ENCODE measurements at regions of chr4 and their contacts with region 1.

Region 1: DNA sequence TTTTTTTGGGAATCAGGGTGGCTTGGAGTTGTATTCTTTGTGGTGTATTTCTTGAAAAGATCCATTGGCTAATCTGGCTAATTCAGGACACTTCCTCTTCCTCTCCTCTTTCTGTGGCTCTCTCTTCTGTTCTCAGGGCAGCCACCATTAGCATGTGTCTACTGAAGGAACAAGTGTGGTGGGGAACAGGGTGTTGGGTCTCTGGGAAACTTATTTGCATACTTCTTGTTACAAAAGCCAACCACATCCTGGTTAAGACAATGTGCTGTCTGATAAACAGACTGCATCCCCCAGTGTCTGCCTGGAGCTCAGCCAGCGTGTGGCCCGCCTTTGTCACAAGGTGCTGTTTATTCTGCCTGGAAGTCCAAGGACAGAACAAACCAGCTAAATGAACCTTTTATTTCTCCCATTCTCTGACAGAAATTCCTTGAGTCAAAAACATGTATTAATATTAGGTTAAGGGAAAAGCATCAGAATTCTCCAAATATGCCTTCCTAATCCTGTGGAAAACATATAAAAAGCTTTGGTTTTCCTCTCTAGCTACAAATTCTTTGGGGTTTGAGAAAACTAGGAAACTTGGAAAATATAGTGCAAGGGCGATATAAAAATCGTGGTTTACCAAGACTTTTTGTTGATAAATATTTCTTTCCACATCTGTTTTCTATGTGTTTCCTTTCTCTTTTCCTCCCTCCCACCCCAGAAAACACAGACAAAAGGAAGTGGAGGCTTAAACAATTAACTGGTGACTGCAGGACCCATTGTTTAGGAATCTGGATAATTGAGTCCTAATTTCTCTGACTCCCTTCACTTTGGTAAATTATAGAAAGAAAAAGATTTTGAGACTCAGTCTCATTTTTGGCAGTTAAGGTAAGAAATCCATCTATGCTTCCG is 203.6 kb downstream of the SPRY1 start:
- DNase-seq: peak; percentile 46 to 81
- ATAC-seq: peak; percentile 95 to 99 (median 97)
- H3K4me3 ChIP-seq: no peak overlapping the region
- H3K4me3 Mint-ChIP-seq: peak overlapping the region; percentile 38
- H3K27ac ChIP-seq: peak overlapping the region; percentile 57
- H3K27ac Mint-ChIP-seq: peak overlapping the region; percentile 76 to 91
- H3K4me1 ChIP-seq: peaks cover 11% of the 10 kb centered on the region
- H3K4me1 Mint-ChIP-seq: peaks cover 33 to 34% of the 10 kb centered on the region in 2 donors
- H3K27me3 ChIP-seq: no peaks in the 10 kb centered on the region
- H3K27me3 Mint-ChIP-seq: peaks cover 0 to 2% of the 10 kb centered on the region in 2 donors
- CTCF ChIP-seq: no peak

Region 2: GRCh38 chr4:123037804-123038203 is 562.4 kb before region 1 on chr4:
- intact Hi-C with region 1: no loop called
- DNase-seq: no peak
- ATAC-seq: no peak
- H3K4me3 ChIP-seq: no peak overlapping the region
- H3K4me3 Mint-ChIP-seq: no peak overlapping the region
- H3K27ac ChIP-seq: no peak overlapping the region
- H3K27ac Mint-ChIP-seq: no peak overlapping the region
- H3K4me1 ChIP-seq: no peaks in the 10 kb centered on the region
- H3K4me1 Mint-ChIP-seq: peaks cover 4 to 5% of the 10 kb centered on the region in 2 donors
- H3K27me3 ChIP-seq: no peaks in the 10 kb centered on the region
- H3K27me3 Mint-ChIP-seq: no peaks in the 10 kb centered on the region
- CTCF ChIP-seq: no peak

Region 3: DNA sequence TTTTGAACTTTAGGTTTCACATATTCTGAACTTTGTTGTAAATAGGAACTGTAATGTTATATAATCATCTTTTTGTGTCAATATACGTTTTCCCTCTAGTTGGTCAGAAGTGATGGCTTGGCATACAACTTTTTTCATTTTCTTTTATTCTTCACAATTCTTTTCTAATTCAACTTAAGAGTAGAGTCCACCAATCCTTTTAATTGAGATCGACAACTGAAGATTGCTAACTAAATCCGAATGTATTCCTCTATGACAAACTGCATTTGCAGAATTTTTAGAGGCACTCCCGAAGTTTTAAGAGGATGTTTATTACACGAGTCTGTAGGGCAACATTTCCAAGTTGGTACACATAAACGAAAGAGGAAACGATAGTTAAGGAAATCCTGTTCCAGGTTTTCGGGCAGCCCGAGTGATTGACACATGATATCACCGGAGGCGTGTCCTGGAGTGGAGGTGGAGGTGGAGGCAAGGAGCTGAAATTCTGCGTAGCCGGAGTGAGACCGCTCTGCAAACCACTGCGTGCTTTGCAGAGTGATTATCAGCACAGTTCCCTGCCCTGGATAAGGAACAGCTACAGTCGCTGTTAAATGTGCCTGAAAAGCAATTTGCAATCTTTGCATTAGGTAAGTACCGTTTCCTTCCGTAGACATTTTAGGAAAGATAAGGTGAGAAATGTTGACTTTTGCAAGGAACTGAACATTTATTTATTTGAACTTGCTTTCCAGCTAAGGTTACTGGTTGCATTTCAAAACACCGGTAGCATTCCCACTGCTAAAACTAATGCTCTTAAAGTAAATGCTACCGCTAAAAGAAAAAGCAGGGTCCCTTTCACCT is 203.6 kb before region 1 on chr4 and contains the start of gene SPRY1:
- intact Hi-C with region 1: loop called (anchors 2 kb)
- DNase-seq: peak; percentile 50 to 85
- ATAC-seq: peak; percentile 43 to 53 (median 52)
- H3K4me3 ChIP-seq: peak within 1 kb of the TSS; percentile 49
- H3K4me3 Mint-ChIP-seq: peak within 1 kb of the TSS; percentile 92
- H3K27ac ChIP-seq: peak within 1 kb of the TSS; percentile 15
- H3K27ac Mint-ChIP-seq: peak within 1 kb of the TSS; percentile 72 to 76
- H3K4me1 ChIP-seq: peaks cover 25% of the 10 kb centered on the region
- H3K4me1 Mint-ChIP-seq: peaks cover 29 to 36% of the 10 kb centered on the region in 2 donors
- H3K27me3 ChIP-seq: peaks cover 10% of the 10 kb centered on the region
- H3K27me3 Mint-ChIP-seq: peaks cover 11 to 13% of the 10 kb centered on the region in 2 donors
- CTCF ChIP-seq: no peak
- total RNA-seq, gene SPRY1: 8.7 to 9.8 (median 9.5) TPM

Region 4: DNA sequence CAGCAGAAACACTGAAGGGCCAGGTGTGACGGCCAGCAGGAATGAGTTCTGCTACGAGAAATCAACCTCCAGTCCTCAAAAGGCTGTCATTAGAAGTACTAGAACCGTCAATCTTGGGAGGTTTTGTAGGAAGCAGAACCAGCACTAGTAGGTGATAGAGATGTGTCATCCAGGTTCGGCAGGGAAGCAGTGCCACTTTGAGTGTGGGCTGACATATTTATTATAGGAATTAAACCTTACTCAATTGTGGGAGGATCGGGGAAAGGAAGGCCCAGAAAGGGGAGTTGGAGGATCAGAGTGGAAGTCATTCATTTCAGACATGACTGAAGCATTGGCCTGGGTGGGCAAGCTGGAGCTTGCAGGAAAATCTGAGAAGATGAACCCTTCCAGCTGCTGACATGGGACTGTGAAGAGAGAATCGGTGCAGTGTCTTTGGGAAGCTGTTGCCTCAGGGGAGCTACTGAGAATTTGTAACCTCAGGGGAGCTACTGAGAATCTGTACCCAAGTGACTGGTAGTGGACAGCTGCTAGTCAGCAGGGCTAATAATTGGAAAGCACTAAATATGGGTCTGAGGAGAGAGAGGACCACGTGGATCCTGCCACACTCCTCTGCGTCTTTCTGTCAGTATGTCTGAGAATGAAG is 26.2 kb before region 1 on chr4:
- intact Hi-C with region 1: no loop called
- DNase-seq: no peak
- ATAC-seq: no peak
- H3K4me3 ChIP-seq: no peak overlapping the region
- H3K4me3 Mint-ChIP-seq: no peak overlapping the region
- H3K27ac ChIP-seq: no peak overlapping the region
- H3K27ac Mint-ChIP-seq: no peak overlapping the region
- H3K4me1 ChIP-seq: no peaks in the 10 kb centered on the region
- H3K4me1 Mint-ChIP-seq: peaks cover 5 to 6% of the 10 kb centered on the region in 2 donors
- H3K27me3 ChIP-seq: no peaks in the 10 kb centered on the region
- H3K27me3 Mint-ChIP-seq: no peaks in the 10 kb centered on the region
- CTCF ChIP-seq: no peak